Spleen (tissue), 13 donors: ENCODE measurements at regions of chr18 and their contacts with region 1.

Region 1: DNA sequence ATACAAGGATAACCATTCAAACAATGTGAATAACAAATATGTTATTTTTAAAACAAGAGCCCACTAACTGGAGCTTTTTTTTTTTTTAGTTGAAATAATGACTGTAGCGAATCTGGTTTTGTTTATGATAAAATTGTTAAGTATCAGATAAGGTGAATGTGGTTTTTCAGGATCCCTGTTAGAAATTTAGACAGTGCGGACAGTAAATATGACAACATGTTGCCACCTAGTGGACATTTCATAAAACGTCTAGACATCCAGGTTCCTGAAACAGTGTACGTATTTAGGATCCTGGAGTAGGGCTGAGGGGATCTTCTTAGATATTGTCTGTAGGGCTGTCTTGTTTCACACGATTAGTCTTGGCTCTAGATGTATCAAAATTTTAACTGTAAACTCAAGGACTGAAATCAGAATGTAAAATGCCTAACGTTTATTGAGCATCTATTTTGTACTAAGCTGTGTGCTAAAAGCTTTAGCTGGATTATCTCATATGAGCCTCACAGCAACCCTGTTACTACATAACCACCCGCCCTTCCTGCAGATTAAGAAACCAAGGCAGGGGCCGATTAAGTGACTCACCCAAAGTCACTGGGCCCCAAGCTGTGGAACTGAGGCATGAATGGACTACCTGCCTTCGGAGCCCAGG is 23.9 kb upstream of the CCDC68 start:
- DNase-seq: no peak
- H3K4me3 ChIP-seq: no peak overlapping the region
- H3K27ac ChIP-seq: no peak overlapping the region
- H3K4me1 ChIP-seq: peaks cover 0 to 4% (median 0%) of the 10 kb centered on the region in 6 donors
- H3K27me3 ChIP-seq: no peaks in the 10 kb centered on the region
- CTCF ChIP-seq: peak; percentile 35 to 77 (median 65)
- POLR2A ChIP-seq: no peak

Region 2: GRCh38 chr18:54679318-54680149 is 303.6 kb before region 1 on chr18:
- intact Hi-C with region 1: loop called (anchors 2 kb)
- DNase-seq: no peak
- H3K4me3 ChIP-seq: no peak overlapping the region
- H3K27ac ChIP-seq: no peak overlapping the region
- H3K4me1 ChIP-seq: no peaks in the 10 kb centered on the region
- H3K27me3 ChIP-seq: no peaks in the 10 kb centered on the region
- CTCF ChIP-seq: peak in 4 of 11 experiments; percentile 26 to 54 (median 36)
- POLR2A ChIP-seq: no peak